Posterior vena cava (tissue), 2 donors: ENCODE measurements at regions of chr10 and their contacts with region 1.

Region 1: GRCh38 chr10:108346066-108346465 is 1181.6 kb upstream of the SORCS1 start:
- DNase-seq: no peak

Region 2: DNA sequence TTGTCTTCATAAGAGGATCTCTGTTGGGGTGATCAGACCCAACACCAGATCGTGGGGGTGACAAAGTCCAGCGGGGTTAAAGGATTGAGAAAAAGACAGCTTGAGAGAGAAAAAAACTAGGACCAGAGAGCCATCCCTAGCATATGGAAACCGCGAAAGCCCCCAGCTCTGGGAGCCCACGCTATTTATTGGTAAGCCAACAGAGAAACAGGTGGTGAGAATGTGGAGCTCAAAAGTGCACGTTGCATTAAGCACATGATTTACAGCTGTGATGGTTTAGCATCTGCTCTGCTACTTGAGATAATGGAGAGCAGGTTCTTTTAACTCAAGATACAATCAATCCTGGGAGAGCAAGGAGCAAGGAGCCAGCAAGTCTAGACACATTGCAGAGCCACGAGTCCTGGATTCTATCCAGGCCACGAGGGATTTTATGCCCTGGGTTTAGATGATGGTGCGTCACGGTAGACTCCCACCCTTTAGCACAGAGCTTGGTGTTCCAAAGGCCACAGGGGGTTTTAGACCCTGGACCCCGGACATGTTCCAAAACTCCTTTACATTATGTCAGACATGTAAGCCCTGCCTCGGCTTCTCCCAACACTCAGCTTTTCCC is 426.3 kb before region 1 on chr10:
- intact Hi-C with region 1: loop called in 1 of 2 experiments (anchors 5 kb)
- DNase-seq: no peak